Aorta (tissue), 5 donors: ENCODE measurements at regions of chr15 and their contacts with region 1.

Region 1: DNA sequence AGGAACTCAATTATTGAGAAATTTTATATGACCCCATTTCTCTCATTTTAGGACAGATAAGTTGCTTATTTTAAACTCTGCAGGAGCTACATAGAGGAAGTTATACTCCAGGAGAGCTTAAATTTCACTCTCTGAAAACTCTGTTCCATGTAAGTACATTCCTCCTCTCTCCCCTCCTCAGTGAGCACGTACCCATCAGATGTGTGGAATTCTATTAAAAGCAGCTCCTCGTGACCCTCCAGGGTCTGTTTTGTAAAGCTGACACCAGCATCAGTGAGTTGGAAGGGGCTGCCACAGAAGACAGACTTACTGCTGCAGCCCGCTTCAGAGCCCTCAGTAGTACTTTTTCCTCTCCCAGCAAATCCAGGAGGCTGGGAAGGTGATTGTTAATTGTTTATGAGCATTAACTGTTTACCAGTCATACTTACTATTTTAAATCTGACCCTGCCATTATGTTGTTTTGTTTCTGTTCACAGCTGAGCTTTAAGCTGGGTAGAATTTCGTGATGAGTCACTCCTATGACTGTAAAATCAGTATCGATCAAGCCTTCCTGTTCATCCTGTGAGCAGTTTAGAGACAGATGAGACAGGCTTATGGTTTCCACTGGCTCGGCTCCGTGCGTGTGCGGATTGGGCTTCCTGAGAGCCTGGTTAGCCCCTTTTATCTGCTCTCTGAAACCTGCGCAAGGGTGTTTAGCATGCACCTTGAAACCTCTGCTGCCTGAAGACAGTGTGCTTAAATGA is 20.4 kb downstream of the IGF1R start:
- DNase-seq: no peak
- ATAC-seq: peak; percentile 6
- H3K4me3 ChIP-seq: no peak overlapping the region
- H3K27ac ChIP-seq: peak overlapping the region in 1 of 2 donors; percentile 56
- H3K4me1 ChIP-seq: peaks cover 9 to 29% of the 10 kb centered on the region in 2 donors
- H3K27me3 ChIP-seq: no peaks in the 10 kb centered on the region

Region 2: GRCh38 chr15:98727115-98728085 is 58.7 kb after region 1 on chr15:
- intact Hi-C with region 1: loop called (anchors 5 kb)
- DNase-seq: peak; percentile 93 to 97
- ATAC-seq: peak; percentile 96
- H3K4me3 ChIP-seq: no peak overlapping the region
- H3K27ac ChIP-seq: peak overlapping the region; percentile 98 to 100
- H3K4me1 ChIP-seq: peaks cover 14 to 15% of the 10 kb centered on the region in 2 donors
- H3K27me3 ChIP-seq: no peaks in the 10 kb centered on the region

Region 3: DNA sequence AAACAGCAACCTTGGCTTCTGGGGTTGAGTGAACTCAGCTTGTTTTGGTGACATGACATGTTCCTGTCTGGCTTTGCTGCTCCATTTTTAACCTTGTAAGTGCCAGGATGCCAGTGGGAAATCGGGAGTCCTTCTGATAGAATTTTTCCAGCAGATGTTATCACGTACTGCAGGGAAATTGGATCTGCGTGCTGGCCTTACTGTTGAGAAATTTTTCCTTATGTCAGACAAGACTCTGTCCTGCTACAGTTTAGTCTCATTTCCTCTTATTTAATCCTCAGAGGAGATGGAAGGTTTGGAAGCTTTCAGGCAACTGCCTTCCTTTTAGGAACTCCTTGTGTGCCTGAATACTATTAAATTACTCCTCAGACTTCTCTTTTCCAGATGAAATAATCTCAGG is 258.3 kb after region 1 on chr15:
- intact Hi-C with region 1: no loop called
- DNase-seq: no peak
- ATAC-seq: no peak
- H3K4me3 ChIP-seq: no peak overlapping the region
- H3K27ac ChIP-seq: peak overlapping the region; percentile 8 to 77
- H3K4me1 ChIP-seq: peaks cover 0 to 1% of the 10 kb centered on the region in 2 donors
- H3K27me3 ChIP-seq: no peaks in the 10 kb centered on the region